ENCODE measurements at regions of chr1 and their contacts with region 1.

Region 1: GRCh38 chr1:204806943-204807687 is 63.5 kb upstream of the NFASC start:
- DNase-seq: peak; percentile 92
- ATAC-seq: peak; percentile 96
- H3K4me3 Mint-ChIP-seq: peak overlapping the region; percentile 74
- H3K27ac Mint-ChIP-seq: peak overlapping the region; percentile 86
- H3K4me1 Mint-ChIP-seq: peaks cover 5% of the 10 kb centered on the region
- H3K27me3 Mint-ChIP-seq: no peaks in the 10 kb centered on the region

Region 2: GRCh38 chr1:204073837-204074273 is 733.3 kb before region 1 on chr1:
- CTCF ChIA-PET with region 1: no interaction called
- POLR2A ChIA-PET with region 1: no interaction called
- intact Hi-C with region 1: no loop called
- DNase-seq: peak; percentile 18
- ATAC-seq: no peak
- H3K4me3 Mint-ChIP-seq: peak overlapping the region; percentile 66
- H3K27ac Mint-ChIP-seq: no peak overlapping the region
- H3K4me1 Mint-ChIP-seq: peaks cover 18% of the 10 kb centered on the region
- H3K27me3 Mint-ChIP-seq: peaks cover 63% of the 10 kb centered on the region

Region 3: DNA sequence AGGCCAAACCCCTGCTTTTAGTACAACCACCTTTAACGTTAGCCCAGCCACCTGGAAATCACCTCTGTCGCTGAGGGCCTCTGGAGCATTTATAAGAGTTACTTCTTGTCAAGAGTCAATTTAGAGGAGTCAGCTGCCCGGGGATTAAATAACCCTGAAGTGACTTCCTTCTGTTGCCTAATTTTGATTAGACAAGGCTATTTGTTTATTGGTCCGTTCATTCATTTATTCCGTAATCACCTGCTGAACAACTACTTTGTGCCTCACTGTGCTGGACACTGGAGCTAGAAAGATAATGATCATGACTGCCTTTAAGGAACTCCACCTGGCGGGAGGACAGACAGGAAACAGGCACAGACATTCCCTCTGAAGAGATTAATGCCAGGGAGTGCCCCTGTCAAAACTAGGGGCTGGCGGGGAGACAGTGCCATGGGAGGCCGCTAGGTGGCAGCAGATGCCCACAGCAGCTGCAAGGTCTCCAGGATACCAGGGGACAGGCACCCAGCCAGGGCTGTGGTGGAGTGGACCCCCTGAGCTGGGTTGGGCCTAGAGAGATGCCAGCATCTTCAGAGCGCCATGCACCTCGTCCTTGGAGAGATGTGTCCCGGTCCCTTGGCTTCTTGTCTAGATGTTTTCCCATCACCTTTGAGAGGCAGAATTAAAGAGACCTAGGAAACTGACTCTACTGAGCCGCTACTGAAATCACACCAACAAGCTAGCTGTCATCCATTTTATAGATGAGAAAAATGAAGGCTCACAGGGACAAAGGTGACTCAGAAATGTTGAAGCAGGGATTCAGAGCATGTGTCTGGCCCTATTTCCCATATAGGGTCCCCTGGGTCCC is 644.7 kb before region 1 on chr1:
- CTCF ChIA-PET with region 1: interaction called, 4 read pairs
- POLR2A ChIA-PET with region 1: no interaction called
- intact Hi-C with region 1: loop called in 1 of 2 experiments (anchors 2 kb)
- DNase-seq: peak; percentile 88
- ATAC-seq: peak; percentile 98
- H3K4me3 Mint-ChIP-seq: no peak overlapping the region
- H3K27ac Mint-ChIP-seq: no peak overlapping the region
- H3K4me1 Mint-ChIP-seq: peaks cover 1% of the 10 kb centered on the region
- H3K27me3 Mint-ChIP-seq: peaks cover 7% of the 10 kb centered on the region

Region 4: GRCh38 chr1:204516180-204516879 is 290.8 kb before region 1 on chr1 and contains the start of gene MDM4:
- CTCF ChIA-PET with region 1: interaction called, 15 read pairs
- POLR2A ChIA-PET with region 1: no interaction called
- intact Hi-C with region 1: loop called in 1 of 2 experiments (anchors 2 kb)
- DNase-seq: peak; percentile 98
- ATAC-seq: peak; percentile 85
- H3K4me3 Mint-ChIP-seq: no peak within 1 kb of the TSS
- H3K27ac Mint-ChIP-seq: no peak within 1 kb of the TSS
- H3K4me1 Mint-ChIP-seq: peaks cover 62% of the 10 kb centered on the region
- H3K27me3 Mint-ChIP-seq: no peaks in the 10 kb centered on the region
- total RNA-seq, gene MDM4: 89.1 to 94.6 TPM

Region 5: GRCh38 chr1:204565617-204566582 is 241.2 kb before region 1 on chr1:
- CTCF ChIA-PET with region 1: interaction called, 126 read pairs
- POLR2A ChIA-PET with region 1: interaction called, 4 read pairs
- intact Hi-C with region 1: loop called (anchors 1 kb)
- DNase-seq: peak; percentile 76
- ATAC-seq: peak; percentile 81
- H3K4me3 Mint-ChIP-seq: no peak overlapping the region
- H3K27ac Mint-ChIP-seq: peak overlapping the region; percentile 81
- H3K4me1 Mint-ChIP-seq: peaks cover 54% of the 10 kb centered on the region
- H3K27me3 Mint-ChIP-seq: no peaks in the 10 kb centered on the region

Region 6: GRCh38 chr1:204653590-204654340 is 153.3 kb before region 1 on chr1:
- CTCF ChIA-PET with region 1: interaction called, 10 read pairs
- POLR2A ChIA-PET with region 1: no interaction called
- intact Hi-C with region 1: no loop called
- DNase-seq: no peak
- ATAC-seq: no peak
- H3K4me3 Mint-ChIP-seq: no peak overlapping the region
- H3K27ac Mint-ChIP-seq: no peak overlapping the region
- H3K4me1 Mint-ChIP-seq: no peaks in the 10 kb centered on the region
- H3K27me3 Mint-ChIP-seq: peaks cover 5% of the 10 kb centered on the region

Region 7: GRCh38 chr1:204763706-204764427 is 43.2 kb before region 1 on chr1:
- CTCF ChIA-PET with region 1: interaction called, 28 read pairs
- POLR2A ChIA-PET with region 1: no interaction called
- intact Hi-C with region 1: loop called (anchors 2 to 5 kb)
- DNase-seq: peak; percentile 90
- ATAC-seq: peak; percentile 95
- H3K4me3 Mint-ChIP-seq: no peak overlapping the region
- H3K27ac Mint-ChIP-seq: no peak overlapping the region
- H3K4me1 Mint-ChIP-seq: peaks cover 9% of the 10 kb centered on the region
- H3K27me3 Mint-ChIP-seq: peaks cover 8% of the 10 kb centered on the region

Region 8: DNA sequence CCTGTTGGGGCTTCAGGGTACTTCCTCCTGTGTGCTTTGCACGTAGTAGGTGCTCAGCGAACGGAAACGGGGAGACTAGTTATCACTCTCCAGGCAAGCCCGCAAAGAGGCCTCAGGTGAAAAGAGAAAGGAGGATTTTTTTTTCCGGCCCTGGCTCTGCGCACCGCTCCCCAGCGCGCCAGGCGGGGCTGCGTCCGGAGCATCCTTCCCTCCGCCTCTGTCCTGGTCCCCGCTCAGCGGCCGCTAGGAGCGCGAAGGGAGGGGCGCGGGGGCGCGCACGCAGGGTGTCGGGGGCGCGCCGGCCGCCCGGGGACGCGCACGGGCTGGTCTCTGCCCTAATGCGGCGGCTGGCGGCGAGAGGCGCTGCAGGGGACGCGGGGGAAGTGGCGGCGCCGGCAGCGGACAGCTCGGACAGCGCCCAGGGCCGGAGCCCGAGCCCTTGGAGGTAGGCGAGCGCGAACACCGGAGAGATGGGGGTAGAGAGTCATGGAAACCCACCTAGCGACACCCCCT is 21.3 kb after region 1 on chr1:
- CTCF ChIA-PET with region 1: interaction called, 39 read pairs
- POLR2A ChIA-PET with region 1: interaction called, 3 read pairs
- intact Hi-C with region 1: no loop called
- DNase-seq: peak; percentile 74
- ATAC-seq: peak; percentile 87
- H3K4me3 Mint-ChIP-seq: no peak overlapping the region
- H3K27ac Mint-ChIP-seq: no peak overlapping the region
- H3K4me1 Mint-ChIP-seq: peaks cover 4% of the 10 kb centered on the region
- H3K27me3 Mint-ChIP-seq: peaks cover 38% of the 10 kb centered on the region

Region 9: DNA sequence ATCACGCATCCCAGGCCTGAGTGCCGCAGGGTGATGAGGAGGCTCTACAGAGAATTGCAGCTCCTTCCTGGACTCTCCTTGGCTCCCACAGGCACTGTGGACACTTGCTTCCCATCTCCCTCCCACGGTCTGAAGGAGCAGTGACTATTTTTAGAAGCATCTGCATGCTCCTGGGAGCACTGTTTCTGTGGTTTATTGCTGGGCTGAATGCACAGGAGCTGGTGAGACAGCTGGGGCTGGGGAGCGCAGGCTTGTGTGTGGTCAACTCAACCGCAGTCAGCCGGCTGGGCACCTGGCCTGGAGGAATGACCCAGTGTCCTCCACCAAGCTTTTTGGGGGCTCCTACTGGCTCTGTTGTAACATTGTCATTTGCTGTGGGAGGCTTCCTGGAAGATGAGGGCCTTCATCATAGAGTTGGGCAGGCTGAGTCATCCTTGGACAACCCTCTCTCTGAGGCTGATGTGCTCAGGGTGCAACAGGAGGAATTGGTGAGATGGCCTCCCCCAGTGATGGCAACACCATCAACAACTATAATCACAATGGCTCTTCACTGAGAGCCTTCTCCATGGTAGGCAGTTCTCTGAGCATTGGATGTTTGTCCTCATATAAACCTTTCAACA is 65.3 kb after region 1 on chr1:
- CTCF ChIA-PET with region 1: no interaction called
- POLR2A ChIA-PET with region 1: no interaction called
- intact Hi-C with region 1: no loop called
- DNase-seq: no peak
- ATAC-seq: peak; percentile 26
- H3K4me3 Mint-ChIP-seq: no peak overlapping the region
- H3K27ac Mint-ChIP-seq: no peak overlapping the region
- H3K4me1 Mint-ChIP-seq: no peaks in the 10 kb centered on the region
- H3K27me3 Mint-ChIP-seq: peaks cover 13% of the 10 kb centered on the region